ENCODE measurements at regions of chr2 and their contacts with region 1.

Region 1: GRCh38 chr2:108637304-108637669 is 82.0 kb upstream of the RANBP2 start:
- DNase-seq: peak; percentile 56
- CTCF ChIP-seq: no peak

Region 2: DNA sequence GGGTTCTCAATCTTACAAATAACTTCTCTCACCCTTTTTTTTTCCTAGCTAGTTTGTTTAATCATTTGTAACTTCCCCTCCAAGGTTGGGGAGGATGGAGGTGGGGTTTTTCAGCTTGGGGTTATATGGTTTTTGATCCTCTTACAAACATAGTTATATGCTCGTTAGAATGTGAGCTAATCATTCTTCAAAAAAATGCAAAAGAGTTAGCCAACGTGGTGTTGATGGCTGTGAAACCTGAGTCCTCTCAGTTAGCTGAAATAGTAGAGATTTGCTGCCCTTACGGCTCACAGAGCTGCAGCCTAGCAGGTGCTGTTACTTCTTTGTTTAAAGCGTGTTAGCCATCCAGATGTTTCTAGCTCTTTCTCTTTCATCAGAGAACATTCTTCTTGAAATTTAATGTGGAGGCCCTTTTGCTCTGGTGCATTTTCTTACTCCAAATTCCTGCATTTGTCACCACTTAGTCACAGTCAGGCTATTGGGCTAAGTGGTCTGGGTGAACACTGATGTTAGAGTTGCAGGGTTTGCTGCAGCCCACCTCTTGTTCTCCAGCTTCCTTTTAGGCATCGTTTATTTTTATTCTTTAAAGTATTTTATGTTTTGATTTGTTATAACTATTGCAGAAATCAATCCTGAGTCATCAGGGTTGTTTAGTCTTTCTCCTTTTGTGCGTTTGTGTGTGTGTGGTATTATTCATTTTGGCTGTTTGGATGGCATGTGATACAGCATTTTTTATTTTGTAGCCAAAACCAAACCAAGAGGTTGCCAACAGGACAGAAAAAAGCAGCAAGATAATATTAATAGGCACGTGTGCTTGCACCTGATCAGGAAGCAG is 61.9 kb before region 1 on chr2:
- CTCF ChIA-PET with region 1: interaction called, 10 read pairs
- POLR2A ChIA-PET with region 1: no interaction called
- DNase-seq: peak; percentile 40
- CTCF ChIP-seq: no peak

Region 3: DNA sequence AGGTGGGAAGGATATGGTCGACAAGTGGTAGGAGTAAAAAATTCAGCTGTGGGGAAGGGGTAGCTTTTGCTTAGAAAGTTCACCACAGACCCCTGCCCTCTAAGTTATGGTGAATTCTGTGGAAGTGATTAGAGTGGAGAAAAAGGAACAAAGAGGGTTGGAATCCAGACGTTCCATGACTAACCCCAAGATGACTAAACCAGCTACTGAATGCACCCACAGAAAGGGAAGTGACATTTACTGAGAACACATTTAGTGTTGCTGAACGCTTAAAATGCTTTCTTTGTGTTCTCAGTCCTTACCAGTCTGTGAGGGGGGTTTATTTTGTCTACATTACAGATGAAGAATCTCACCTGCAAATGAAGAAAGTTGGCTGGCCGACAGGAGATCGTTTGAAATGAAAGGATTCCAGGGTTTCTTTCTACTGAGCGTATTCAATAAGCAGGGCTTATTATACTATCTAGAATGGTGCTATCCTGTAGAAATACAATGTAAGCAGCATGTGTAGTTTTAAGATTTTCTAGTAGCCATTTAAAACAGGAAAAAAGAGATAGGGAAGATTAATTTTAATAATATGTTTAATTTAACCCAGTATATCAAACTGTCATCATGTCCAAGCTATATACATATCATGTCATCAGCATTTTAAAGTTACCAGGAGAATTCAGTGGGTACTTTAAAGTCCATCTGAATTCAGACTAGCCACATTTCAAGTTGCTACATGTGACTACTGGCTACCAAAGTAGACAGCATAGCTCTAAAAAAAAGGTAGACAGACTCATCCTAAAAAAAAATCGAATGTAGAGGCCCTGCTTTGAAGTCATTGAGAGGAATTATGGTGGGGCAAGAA is 42.9 kb before region 1 on chr2:
- CTCF ChIA-PET with region 1: interaction called, 20 read pairs
- POLR2A ChIA-PET with region 1: no interaction called
- DNase-seq: peak; percentile 49
- CTCF ChIP-seq: no peak

Region 4: GRCh38 chr2:108607706-108608301 is 29.5 kb before region 1 on chr2:
- CTCF ChIA-PET with region 1: interaction called, 224 read pairs
- POLR2A ChIA-PET with region 1: interaction called, 7 read pairs
- DNase-seq: peak; percentile 42
- CTCF ChIP-seq: peak; percentile 80

Region 5: DNA sequence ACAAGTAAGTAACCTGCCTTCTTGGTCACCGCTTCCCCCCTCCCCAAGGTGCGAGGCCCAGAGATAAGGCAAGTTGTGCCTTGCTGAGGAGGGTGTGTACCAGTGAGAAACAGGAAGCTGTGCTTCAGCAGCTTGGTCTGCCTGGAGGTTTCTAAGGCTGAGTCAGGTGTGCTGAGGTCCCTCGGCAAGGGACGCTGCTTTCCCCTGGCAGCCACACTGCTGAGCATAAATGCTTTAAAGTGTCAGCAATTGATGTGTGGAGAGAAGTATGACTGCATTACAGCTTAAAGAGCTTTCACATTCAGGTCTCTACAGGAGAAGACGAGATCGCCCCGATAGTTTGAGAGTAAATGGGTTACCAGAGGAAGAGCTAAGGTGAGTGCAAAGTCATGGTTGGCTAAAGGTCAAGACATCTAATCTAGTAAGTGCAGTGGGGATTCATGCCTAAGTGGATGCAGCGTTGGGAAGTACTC is 16.2 kb before region 1 on chr2:
- CTCF ChIA-PET with region 1: interaction called, 224 read pairs
- POLR2A ChIA-PET with region 1: interaction called, 3 read pairs
- DNase-seq: peak; percentile 74
- CTCF ChIP-seq: peak; percentile 2

Region 6: GRCh38 chr2:108870069-108870644 is 232.9 kb after region 1 on chr2:
- CTCF ChIA-PET with region 1: no interaction called
- POLR2A ChIA-PET with region 1: no interaction called
- DNase-seq: no peak
- CTCF ChIP-seq: no peak

Region 7: GRCh38 chr2:109031476-109032228 is 394.4 kb after region 1 on chr2:
- CTCF ChIA-PET with region 1: no interaction called
- POLR2A ChIA-PET with region 1: no interaction called
- DNase-seq: peak; percentile 36
- CTCF ChIP-seq: no peak